ENCODE measurements at regions of chr13 and their contacts with region 1.

Region 1: GRCh38 chr13:39415008-39415802 is 187.8 kb downstream of the LHFPL6 start:
- DNase-seq: peak; percentile 83
- H3K4me3 ChIP-seq: no peak overlapping the region
- H3K27ac ChIP-seq: peak overlapping the region; percentile 56
- H3K4me1 ChIP-seq: peaks cover 99% of the 10 kb centered on the region
- H3K27me3 ChIP-seq: no peaks in the 10 kb centered on the region
- CTCF ChIP-seq: peak; percentile 82

Region 2: GRCh38 chr13:39253774-39254173 is 161.4 kb before region 1 on chr13:
- CTCF ChIA-PET with region 1: no interaction called
- POLR2A ChIA-PET with region 1: no interaction called
- intact Hi-C with region 1: no loop called
- DNase-seq: peak; percentile 46
- H3K4me3 ChIP-seq: no peak overlapping the region
- H3K27ac ChIP-seq: no peak overlapping the region
- H3K4me1 ChIP-seq: no peaks in the 10 kb centered on the region
- H3K27me3 ChIP-seq: no peaks in the 10 kb centered on the region
- CTCF ChIP-seq: no peak

Region 3: GRCh38 chr13:39370554-39370953 is 44.7 kb before region 1 on chr13:
- CTCF ChIA-PET with region 1: no interaction called
- POLR2A ChIA-PET with region 1: interaction called, 3 read pairs
- intact Hi-C with region 1: loop called (anchors 2 kb)
- DNase-seq: peak; percentile 91
- H3K4me3 ChIP-seq: no peak overlapping the region
- H3K27ac ChIP-seq: peak overlapping the region; percentile 92
- H3K4me1 ChIP-seq: peaks cover 89% of the 10 kb centered on the region
- H3K27me3 ChIP-seq: no peaks in the 10 kb centered on the region
- CTCF ChIP-seq: no peak

Region 4: GRCh38 chr13:39494006-39494405 is 78.8 kb after region 1 on chr13:
- CTCF ChIA-PET with region 1: no interaction called
- POLR2A ChIA-PET with region 1: no interaction called
- intact Hi-C with region 1: loop called (anchors 10 kb)
- DNase-seq: no peak
- H3K4me3 ChIP-seq: no peak overlapping the region
- H3K27ac ChIP-seq: no peak overlapping the region
- H3K4me1 ChIP-seq: peaks cover 59% of the 10 kb centered on the region
- H3K27me3 ChIP-seq: no peaks in the 10 kb centered on the region
- CTCF ChIP-seq: no peak

Region 5: GRCh38 chr13:39602614-39603366 is 187.6 kb after region 1 on chr13 and contains the start of gene LHFPL6:
- CTCF ChIA-PET with region 1: interaction called, 8 read pairs
- POLR2A ChIA-PET with region 1: no interaction called
- intact Hi-C with region 1: loop called (anchors 1 kb)
- DNase-seq: peak; percentile 92
- H3K4me3 ChIP-seq: peak within 1 kb of the TSS; percentile 96
- H3K27ac ChIP-seq: peak within 1 kb of the TSS; percentile 90
- H3K4me1 ChIP-seq: peaks cover 20% of the 10 kb centered on the region
- H3K27me3 ChIP-seq: no peaks in the 10 kb centered on the region
- CTCF ChIP-seq: peak; percentile 63
- total RNA-seq, gene LHFPL6: 63.9 and 72.1 TPM in 2 replicates